Pancreas (tissue), 10 donors: ENCODE measurements at regions of chr9 and their contacts with region 1.

Region 1: DNA sequence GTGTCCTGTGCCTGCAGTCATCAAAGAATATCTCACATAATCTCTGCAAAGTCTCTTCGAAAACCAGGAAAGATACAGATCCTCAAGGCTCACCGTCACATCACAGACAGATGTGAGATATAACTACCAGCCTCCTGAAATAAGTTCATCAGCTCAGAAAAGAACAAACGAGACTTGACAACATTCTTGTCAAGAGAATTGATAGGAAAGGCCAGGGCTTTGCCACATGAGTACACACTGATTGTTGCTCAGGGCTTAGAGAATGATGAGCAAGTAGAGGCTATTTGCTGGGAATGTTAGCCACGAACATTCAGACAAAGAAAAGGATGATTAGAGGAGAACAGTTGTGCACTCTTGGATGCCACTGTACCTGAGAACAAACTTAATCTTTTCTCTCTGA is 535.1 kb downstream of the ELAVL2 start:
- DNase-seq: no peak
- ATAC-seq: no peak
- H3K4me3 ChIP-seq: no peak overlapping the region
- H3K27ac ChIP-seq: no peak overlapping the region
- H3K4me1 ChIP-seq: no peaks in the 10 kb centered on the region
- H3K27me3 ChIP-seq: no peaks in the 10 kb centered on the region
- CTCF ChIP-seq: no peak

Region 2: GRCh38 chr9:23357651-23358050 is 66.7 kb after region 1 on chr9:
- intact Hi-C with region 1: no loop called
- DNase-seq: no peak
- ATAC-seq: no peak
- H3K4me3 ChIP-seq: no peak overlapping the region
- H3K27ac ChIP-seq: no peak overlapping the region
- H3K4me1 ChIP-seq: no peaks in the 10 kb centered on the region
- H3K27me3 ChIP-seq: no peaks in the 10 kb centered on the region
- CTCF ChIP-seq: no peak

Region 3: DNA sequence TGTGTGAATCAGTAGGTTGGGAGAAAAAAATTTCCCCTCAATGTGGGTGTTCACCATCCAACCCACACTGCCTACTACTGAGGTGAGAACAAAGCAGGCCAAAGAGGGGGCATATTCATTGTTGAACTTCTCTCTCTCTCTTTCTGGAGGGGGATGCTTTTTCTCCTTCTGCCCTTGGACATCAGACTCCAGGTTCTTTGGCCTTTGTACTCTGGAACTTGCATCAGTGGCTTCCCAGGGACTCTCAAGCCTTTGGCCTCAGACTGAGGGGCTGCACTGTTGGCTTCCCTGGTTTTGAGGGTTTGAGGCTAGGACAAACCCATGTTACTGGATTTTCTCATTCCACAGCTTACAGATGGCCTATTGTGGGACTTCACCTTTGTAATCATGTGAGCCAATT is 117.9 kb after region 1 on chr9:
- intact Hi-C with region 1: loop called in 1 of 3 experiments (anchors 5 kb)
- DNase-seq: no peak
- ATAC-seq: no peak
- H3K4me3 ChIP-seq: no peak overlapping the region
- H3K27ac ChIP-seq: no peak overlapping the region
- H3K4me1 ChIP-seq: no peaks in the 10 kb centered on the region
- H3K27me3 ChIP-seq: no peaks in the 10 kb centered on the region
- CTCF ChIP-seq: no peak